ENCODE measurements at regions of chr1 and their contacts with region 1.

Region 1: DNA sequence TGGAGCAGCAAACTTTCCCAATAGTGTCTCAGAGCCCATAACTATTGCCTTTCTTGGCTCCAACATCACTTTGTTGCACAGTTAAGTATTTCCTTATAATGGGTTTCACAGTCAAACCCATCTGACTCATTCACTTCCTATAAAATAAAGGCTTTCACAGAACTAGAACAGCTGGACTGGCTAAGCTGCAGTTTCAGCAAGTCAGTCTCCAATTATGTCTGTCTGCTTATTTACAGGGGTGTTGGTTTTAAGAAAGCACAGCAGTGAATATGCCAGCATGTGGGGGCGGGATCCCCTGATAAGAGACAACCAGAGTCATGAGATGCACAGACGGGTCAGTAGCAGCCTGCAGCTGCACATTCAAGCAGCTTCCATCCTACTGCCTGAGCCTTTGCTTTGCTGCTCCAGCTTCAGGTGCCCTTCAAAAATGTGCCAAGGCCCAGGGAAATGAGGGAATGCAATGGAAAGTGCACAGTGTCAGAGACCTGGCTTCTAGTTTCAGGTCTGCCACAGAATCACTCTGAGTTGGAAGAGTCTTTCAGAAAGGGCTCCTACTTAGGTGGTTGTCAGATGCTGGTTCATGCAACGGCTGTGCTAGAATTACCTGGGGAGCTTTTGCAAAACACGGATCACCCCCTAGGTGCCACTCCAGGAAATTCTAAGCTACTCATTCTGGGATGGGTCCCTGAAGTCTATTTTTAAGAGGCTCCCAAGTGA is 24.8 kb downstream of the RNF19B start:
- DNase-seq: peak; percentile 87

Region 2: DNA sequence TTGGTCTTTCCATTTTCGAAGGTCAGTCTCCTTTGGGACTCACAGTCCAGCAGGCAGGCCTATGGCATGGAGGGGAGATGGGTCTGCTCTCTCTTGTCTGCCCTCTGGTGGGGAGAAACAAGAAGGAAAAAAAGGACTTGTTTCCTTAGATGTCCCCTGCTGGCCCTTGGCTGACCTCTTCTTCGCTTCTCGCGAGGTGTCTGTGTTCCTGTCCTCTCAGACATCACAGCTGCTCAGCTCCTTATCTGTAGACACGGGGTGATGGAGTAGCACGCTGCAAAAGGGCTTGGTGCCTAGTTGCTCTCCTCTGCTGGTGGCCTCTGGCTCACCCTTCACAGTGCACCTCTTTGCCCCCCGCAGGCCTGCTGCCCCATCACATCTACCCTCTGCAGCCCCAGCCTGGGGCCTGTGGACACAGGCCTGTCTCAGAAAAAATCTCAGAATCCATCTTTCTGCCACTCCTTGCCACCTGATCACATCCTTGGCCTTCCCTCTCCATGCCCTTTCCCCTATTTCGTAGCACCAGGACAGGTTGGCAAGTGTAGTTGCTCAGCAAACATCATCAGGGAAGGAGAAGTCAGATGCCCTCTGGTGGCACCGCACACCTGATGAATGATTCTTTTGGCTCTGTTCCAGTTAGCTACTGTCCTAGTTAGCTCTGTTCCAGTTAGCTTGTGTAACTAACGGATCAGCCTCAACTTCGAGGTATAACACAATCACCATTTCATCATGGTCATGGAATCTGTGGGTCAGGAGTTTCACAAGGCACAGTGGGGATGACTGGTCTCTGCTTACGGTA is 115.6 kb after region 1 on chr1:
- intact Hi-C with region 1: loop called in 1 of 2 experiments (anchors 5 kb)
- DNase-seq: peak; percentile 89

Region 3: DNA sequence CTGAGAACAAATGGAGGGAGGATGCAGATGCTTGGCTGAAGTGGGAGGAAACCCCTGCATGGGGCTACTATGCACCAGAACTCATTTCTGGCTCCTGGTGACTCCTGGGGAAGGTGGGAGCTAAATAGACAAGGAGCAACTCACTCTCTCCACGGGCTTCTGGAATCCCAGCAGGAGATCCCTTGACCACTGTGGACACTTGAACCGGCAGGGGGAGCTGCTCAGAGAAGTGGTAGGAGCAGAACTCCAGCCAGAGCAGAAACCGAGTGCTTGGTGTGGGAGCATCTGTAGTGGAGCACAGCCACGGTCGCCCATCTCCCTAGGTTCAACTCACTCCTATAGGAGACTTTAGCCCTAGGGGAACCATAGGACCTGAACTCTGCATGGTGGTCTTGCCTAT is 1609.4 kb after region 1 on chr1:
- intact Hi-C with region 1: no loop called
- DNase-seq: no peak

Measured in posterior vena cava (tissue), 2 donors.